H1 (cell line): ENCODE measurements at regions of chr10 and their contacts with region 1.

Region 1: GRCh38 chr10:34956752-34957151 is 133.4 kb downstream of the CUL2 start:
- DNase-seq: no peak
- H3K4me3 ChIP-seq: no peak overlapping the region
- H3K27ac ChIP-seq: no peak overlapping the region
- H3K4me1 ChIP-seq: no peaks in the 10 kb centered on the region
- H3K27me3 ChIP-seq: no peaks in the 10 kb centered on the region
- CTCF ChIP-seq: no peak
- EP300 ChIP-seq: no peak
- POLR2A ChIP-seq: no peak
- RAD21 ChIP-seq: no peak

Region 2: GRCh38 chr10:34861293-34862021 is 95.3 kb before region 1 on chr10:
- CTCF ChIA-PET with region 1: no interaction called
- POLR2A ChIA-PET with region 1: no interaction called
- DNase-seq: no peak
- H3K4me3 ChIP-seq: no peak overlapping the region
- H3K27ac ChIP-seq: no peak overlapping the region
- H3K4me1 ChIP-seq: peaks cover 4 to 10% (median 6%) of the 10 kb centered on the region in 4 experiments
- H3K27me3 ChIP-seq: no peaks in the 10 kb centered on the region
- CTCF ChIP-seq: no peak
- EP300 ChIP-seq: no peak
- POLR2A ChIP-seq: no peak
- RAD21 ChIP-seq: no peak

Region 3: DNA sequence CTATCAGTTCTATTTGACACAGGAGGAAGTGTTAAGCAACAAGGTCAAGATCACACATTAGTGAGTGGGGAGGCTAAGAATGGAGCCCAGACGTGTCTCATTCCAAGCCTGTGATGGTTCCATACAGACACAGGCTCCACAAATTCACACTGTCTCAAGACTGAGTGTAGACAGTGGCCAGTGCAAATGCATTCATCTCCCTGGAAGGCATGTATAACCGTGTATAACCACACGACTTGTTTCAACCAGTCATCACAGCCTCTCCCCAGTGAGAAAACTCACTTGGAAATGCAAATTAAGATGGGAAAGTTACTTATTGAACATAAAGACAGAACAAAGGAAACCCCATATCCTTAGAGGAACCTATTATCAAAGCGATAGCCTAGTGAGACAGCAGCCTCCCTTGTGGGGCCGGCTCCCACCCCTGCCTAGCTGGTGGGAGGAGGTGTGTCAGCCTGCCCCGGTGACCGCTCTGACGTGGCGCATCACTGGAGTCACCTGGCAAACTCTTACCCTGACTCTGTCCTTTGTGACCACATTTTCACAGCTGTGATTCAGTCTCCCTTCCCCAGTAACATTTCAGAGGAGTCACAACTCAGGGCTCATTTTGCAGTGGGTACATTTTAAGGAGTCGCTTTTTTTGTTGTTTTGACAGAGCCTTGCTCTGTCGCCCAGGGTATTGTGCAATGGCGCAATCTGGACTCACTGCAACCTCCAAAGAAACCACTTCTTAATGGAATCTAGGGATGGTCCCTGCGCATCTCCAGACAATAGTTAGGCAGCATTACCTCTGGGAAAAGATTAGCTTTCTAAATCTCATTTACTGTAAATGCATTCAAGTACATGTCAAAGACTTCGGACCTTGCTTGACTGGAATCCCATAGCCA is 15.0 kb before region 1 on chr10:
- CTCF ChIA-PET with region 1: interaction called, 12 read pairs
- POLR2A ChIA-PET with region 1: no interaction called
- DNase-seq: no peak
- H3K4me3 ChIP-seq: no peak overlapping the region
- H3K27ac ChIP-seq: no peak overlapping the region
- H3K4me1 ChIP-seq: peaks cover 0 to 10% (median 5%) of the 10 kb centered on the region in 4 experiments; a peak in 5 of 7 replicates
- H3K27me3 ChIP-seq: no peaks in the 10 kb centered on the region
- CTCF ChIP-seq: no peak
- EP300 ChIP-seq: no peak
- POLR2A ChIP-seq: no peak
- RAD21 ChIP-seq: no peak